Sigmoid colon (tissue), 7 donors: ENCODE measurements at regions of chr5 and their contacts with region 1.

Region 1: GRCh38 chr5:56070851-56071465 is 76.2 kb upstream of the IL6ST start:
- DNase-seq: no peak
- H3K4me3 ChIP-seq: no peak overlapping the region
- H3K27ac ChIP-seq: peak overlapping the region; percentile 36 to 58 (median 52)
- H3K4me1 ChIP-seq: peaks cover 0 to 21% (median 7%) of the 10 kb centered on the region in 4 donors
- H3K27me3 ChIP-seq: no peaks in the 10 kb centered on the region
- CTCF ChIP-seq: no peak
- EP300 ChIP-seq: no peak
- POLR2A ChIP-seq: no peak

Region 2: DNA sequence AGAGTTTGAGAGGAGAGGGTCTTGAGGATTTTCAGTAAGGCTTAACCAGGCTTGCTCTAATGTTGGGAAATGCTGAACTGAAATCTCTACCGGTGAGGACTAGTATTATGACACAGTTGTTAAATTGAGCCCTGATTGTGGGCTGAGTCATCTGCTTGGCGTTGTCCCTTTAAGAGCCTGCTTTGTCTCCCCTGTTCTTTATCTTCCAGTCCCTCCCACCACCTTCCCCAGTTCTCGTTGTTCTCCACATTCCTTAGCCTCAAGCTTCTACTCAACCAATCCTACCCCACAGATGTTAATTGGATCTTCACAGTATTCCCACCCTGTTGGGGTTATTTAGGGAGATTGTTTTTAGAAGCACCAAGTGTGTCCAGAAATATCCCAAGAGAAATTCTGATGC is 104.5 kb after region 1 on chr5:
- intact Hi-C with region 1: loop called (anchors 10 kb)
- DNase-seq: peak; percentile 85
- H3K4me3 ChIP-seq: no peak overlapping the region
- H3K27ac ChIP-seq: peak overlapping the region; percentile 27 to 58 (median 51)
- H3K4me1 ChIP-seq: peaks cover 0 to 6% (median 0%) of the 10 kb centered on the region in 4 donors
- H3K27me3 ChIP-seq: no peaks in the 10 kb centered on the region
- CTCF ChIP-seq: no peak
- EP300 ChIP-seq: no peak
- POLR2A ChIP-seq: no peak